PC-3 (cell line): ENCODE measurements at regions of chr12 and their contacts with region 1.

Region 1: GRCh38 chr12:95014554-95014953 is 11.1 kb upstream of the NDUFA12 start:
- DNase-seq: no peak
- ATAC-seq: no peak
- H3K4me3 ChIP-seq: no peak overlapping the region
- H3K27ac ChIP-seq: no peak overlapping the region
- H3K4me1 ChIP-seq: no peaks in the 10 kb centered on the region
- H3K27me3 ChIP-seq: no peaks in the 10 kb centered on the region
- CTCF ChIP-seq: no peak

Region 2: GRCh38 chr12:94152292-94153078 is 862.1 kb before region 1 on chr12:
- CTCF ChIA-PET with region 1: no interaction called
- POLR2A ChIA-PET with region 1: interaction called, 16 read pairs
- intact Hi-C with region 1: no loop called
- DNase-seq: peak; percentile 15
- ATAC-seq: peak; percentile 46
- H3K4me3 ChIP-seq: no peak overlapping the region
- H3K27ac ChIP-seq: no peak overlapping the region
- H3K4me1 ChIP-seq: no peaks in the 10 kb centered on the region
- H3K27me3 ChIP-seq: peaks cover 91% of the 10 kb centered on the region
- CTCF ChIP-seq: no peak

Region 3: DNA sequence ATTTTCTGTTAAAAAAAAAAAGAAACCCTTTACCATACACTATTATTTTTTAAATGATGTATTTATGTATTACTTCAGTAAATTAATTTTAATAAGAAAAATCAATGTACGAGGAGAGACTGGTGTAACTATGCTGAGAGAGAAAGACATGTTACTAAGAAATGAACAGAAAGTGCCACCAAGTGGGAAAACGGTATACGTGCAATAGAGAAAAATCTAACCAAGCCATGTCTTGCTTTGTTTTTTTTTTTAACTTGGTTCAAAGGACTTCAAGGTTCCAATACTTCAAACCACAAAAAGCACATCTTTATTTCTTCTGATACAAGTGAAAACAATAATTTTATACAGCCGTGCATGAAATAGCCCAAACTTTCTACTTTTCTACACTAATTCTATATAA is 34.0 kb before region 1 on chr12:
- CTCF ChIA-PET with region 1: no interaction called
- POLR2A ChIA-PET with region 1: no interaction called
- intact Hi-C with region 1: no loop called
- DNase-seq: peak; percentile 2
- ATAC-seq: no peak
- H3K4me3 ChIP-seq: no peak overlapping the region
- H3K27ac ChIP-seq: no peak overlapping the region
- H3K4me1 ChIP-seq: no peaks in the 10 kb centered on the region
- H3K27me3 ChIP-seq: no peaks in the 10 kb centered on the region
- CTCF ChIP-seq: peak; percentile 33; the same call in 1 of the 2 replicates